HCT116 (cell line): ENCODE measurements at regions of chr5 and their contacts with region 1.

Region 1: GRCh38 chr5:6291961-6292360 is 86.4 kb downstream of the MED10 start:
- DNase-seq: peak; percentile 12
- ATAC-seq: peak; percentile 59; the same call in 1 of the 2 replicates
- H3K4me3 ChIP-seq: no peak overlapping the region
- H3K27ac ChIP-seq: no peak overlapping the region
- H3K4me1 ChIP-seq: no peaks in the 10 kb centered on the region
- H3K27me3 ChIP-seq: no peaks in the 10 kb centered on the region
- CTCF ChIP-seq: peak; percentile 13 to 24 (median 19); a peak in 2 of 6 replicates
- POLR2A ChIP-seq: no peak
- RAD21 ChIP-seq: peak; percentile 48

Region 2: GRCh38 chr5:5221724-5222123 is 1070.2 kb before region 1 on chr5:
- CTCF ChIA-PET with region 1: no interaction called
- POLR2A ChIA-PET with region 1: no interaction called
- RAD21 ChIA-PET with region 1: no interaction called
- intact Hi-C with region 1: no loop called
- DNase-seq: no peak
- ATAC-seq: no peak
- H3K4me3 ChIP-seq: no peak overlapping the region
- H3K27ac ChIP-seq: no peak overlapping the region
- H3K4me1 ChIP-seq: no peaks in the 10 kb centered on the region
- H3K27me3 ChIP-seq: no peaks in the 10 kb centered on the region
- CTCF ChIP-seq: no peak
- POLR2A ChIP-seq: no peak
- RAD21 ChIP-seq: no peak

Region 3: DNA sequence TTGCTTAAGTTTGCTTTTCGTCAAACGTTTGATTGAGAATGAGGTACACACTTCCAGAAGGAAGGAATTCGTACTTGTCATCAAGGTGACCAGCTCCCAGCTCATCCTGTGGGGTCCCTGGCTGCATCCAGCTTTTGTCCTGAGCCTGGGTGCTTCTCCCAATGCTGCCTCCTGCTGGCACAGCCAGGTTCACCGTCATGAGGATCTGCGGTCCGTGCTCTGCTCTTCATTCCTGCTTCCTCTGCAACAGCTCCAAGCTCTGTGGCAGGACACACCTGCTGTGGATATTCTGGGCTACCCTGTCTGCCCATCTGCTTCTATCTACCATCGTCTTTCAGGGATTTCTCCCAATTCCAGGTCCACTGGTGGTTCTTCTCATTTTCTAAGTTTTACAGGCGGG is 143.4 kb after region 1 on chr5:
- CTCF ChIA-PET with region 1: no interaction called
- POLR2A ChIA-PET with region 1: no interaction called
- RAD21 ChIA-PET with region 1: no interaction called
- intact Hi-C with region 1: loop called (anchors 10 kb)
- DNase-seq: peak; percentile 19
- ATAC-seq: peak; percentile 78
- H3K4me3 ChIP-seq: no peak overlapping the region
- H3K27ac ChIP-seq: no peak overlapping the region
- H3K4me1 ChIP-seq: no peaks in the 10 kb centered on the region
- H3K27me3 ChIP-seq: peaks cover 41% of the 10 kb centered on the region
- CTCF ChIP-seq: peak; percentile 21 to 60 (median 56); a peak in 5 of 6 replicates
- POLR2A ChIP-seq: no peak
- RAD21 ChIP-seq: peak; percentile 43; the same call in 1 of the 2 replicates

Region 4: DNA sequence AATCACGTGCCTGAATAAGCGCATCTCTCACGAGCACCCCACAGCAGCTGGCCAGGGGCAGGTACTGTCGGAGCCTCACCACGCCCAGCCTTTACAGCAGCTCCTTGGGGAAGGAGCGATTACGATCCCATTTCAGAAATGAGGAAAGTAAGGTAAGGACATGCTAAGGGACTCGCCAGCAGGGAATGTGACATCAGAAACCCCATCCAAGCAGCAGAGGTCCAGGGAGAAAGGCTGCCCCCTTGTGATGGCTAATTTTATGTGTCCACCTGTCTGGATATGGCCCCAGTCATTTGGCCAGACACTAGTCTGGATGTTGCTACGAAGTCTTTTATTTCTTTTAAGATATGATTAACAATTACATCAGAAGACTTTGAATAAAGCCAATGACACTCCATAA is 233.9 kb after region 1 on chr5:
- CTCF ChIA-PET with region 1: no interaction called
- POLR2A ChIA-PET with region 1: no interaction called
- RAD21 ChIA-PET with region 1: no interaction called
- intact Hi-C with region 1: loop called (anchors 1 kb)
- DNase-seq: peak; percentile 13
- ATAC-seq: peak; percentile 88
- H3K4me3 ChIP-seq: no peak overlapping the region
- H3K27ac ChIP-seq: no peak overlapping the region
- H3K4me1 ChIP-seq: no peaks in the 10 kb centered on the region
- H3K27me3 ChIP-seq: peaks cover 30% of the 10 kb centered on the region
- CTCF ChIP-seq: peak; percentile 18 to 63 (median 56); a peak in 5 of 6 replicates
- POLR2A ChIP-seq: no peak
- RAD21 ChIP-seq: peak; percentile 57